Calu3 (cell line): ENCODE measurements at regions of chr6 and their contacts with region 1.

Region 1: DNA sequence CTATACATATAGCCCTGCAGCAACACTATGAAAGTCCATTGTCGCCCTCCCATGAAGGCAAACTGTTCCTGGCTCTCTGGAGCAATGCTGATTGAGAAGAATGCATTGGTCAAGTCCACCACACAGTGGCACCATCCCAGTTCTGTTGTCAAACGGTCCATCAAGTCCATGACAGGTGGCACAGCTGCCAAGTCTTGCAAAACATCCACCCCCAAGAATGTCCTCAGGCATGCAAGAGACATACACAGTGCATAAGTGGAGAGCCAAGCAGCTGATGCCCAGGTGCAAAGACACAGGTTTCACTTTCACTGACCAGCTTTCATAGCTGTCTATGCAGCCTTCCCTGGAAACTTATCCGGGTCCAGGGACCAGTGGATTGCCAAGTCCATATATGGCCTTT is 17.5 kb downstream of the ZNF391 start:
- DNase-seq: no peak
- H3K4me3 Mint-ChIP-seq: no peak overlapping the region
- H3K27ac Mint-ChIP-seq: no peak overlapping the region
- H3K4me1 Mint-ChIP-seq: no peaks in the 10 kb centered on the region
- H3K27me3 Mint-ChIP-seq: no peaks in the 10 kb centered on the region
- CTCF ChIP-seq: no peak

Region 2: DNA sequence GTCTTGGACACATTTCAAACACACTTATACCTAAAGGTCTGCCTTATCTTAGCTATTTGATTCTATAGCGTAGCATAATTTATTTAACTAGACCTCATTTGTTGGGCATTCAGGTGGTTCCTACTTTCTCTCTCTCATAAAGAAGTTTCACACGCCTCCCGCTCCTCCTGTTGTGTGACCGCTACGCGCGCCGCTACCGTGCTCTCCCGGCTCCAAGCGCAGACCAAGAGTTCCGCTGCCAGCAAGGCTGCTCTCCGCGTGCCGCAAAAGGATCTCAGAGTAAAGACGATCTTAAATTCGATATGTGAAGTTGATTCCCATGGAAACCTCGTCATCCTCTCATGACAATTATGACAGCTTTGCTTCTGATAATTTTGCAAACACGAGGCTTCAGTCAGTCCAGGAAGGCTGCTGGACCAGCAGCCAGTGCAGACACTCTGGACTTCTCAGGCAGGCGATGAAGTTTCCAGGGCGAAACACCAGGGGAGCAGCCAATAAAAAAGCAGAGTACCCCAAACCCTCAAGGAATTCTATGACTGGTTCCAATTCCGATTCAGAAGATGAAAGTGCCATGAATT is 138.1 kb before region 1 on chr6:
- CTCF ChIA-PET with region 1: no interaction called
- intact Hi-C with region 1: no loop called
- DNase-seq: no peak
- H3K4me3 Mint-ChIP-seq: no peak overlapping the region
- H3K27ac Mint-ChIP-seq: no peak overlapping the region
- H3K4me1 Mint-ChIP-seq: no peaks in the 10 kb centered on the region
- H3K27me3 Mint-ChIP-seq: no peaks in the 10 kb centered on the region
- CTCF ChIP-seq: no peak

Region 3: GRCh38 chr6:27293436-27294098 is 112.5 kb before region 1 on chr6:
- CTCF ChIA-PET with region 1: no interaction called
- intact Hi-C with region 1: no loop called
- DNase-seq: peak; percentile 40
- H3K4me3 Mint-ChIP-seq: peak overlapping the region; percentile 53
- H3K27ac Mint-ChIP-seq: peak overlapping the region; percentile 55
- H3K4me1 Mint-ChIP-seq: peaks cover 29% of the 10 kb centered on the region
- H3K27me3 Mint-ChIP-seq: no peaks in the 10 kb centered on the region
- CTCF ChIP-seq: no peak

Region 4: DNA sequence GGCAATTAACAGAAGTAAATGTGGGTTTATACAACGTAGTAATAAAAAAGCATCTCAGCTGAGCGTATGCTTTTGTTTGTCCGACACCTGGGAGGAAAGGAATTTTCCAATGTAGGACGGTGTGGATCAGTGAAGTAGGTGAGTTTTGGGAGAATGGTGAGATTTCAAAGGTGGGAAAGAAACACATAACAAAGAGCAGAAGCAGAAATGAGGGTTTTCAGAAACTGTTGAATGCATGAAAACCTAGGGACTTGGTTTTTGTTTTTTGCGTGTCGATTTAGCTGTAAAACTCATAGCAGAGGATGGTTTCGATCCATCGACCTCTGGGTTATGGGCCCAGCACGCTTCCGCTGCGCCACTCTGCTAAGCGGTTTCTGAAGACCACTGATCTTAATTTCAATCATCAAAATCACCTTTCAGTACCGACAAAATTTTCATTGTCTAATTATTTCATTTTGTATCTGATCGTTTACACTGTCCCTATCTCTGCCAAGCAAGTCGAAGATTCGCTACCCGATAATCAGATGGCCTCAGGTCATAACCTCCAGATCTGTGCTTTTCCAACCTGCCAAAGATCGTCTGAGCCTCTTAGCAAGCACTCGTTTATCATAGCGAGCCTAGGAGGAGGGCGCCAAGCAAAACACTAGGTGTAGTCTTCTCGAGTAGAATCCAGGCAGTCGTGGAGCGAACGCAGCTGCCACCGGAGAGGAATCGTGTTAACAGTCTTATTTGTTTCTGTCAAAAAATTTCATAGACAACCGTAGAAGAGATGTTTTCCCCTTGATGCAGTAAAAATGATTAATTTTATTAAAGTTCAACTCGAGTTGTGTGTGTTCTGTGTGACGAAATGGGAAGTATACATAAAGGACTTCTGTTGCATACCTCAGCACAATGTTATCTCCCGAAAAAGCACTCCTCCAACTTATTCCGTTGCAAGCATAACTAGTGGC is 73.1 kb before region 1 on chr6:
- CTCF ChIA-PET with region 1: no interaction called
- intact Hi-C with region 1: no loop called
- DNase-seq: peak; percentile 41
- H3K4me3 Mint-ChIP-seq: peak overlapping the region; percentile 80
- H3K27ac Mint-ChIP-seq: peak overlapping the region; percentile 97
- H3K4me1 Mint-ChIP-seq: peaks cover 9% of the 10 kb centered on the region
- H3K27me3 Mint-ChIP-seq: no peaks in the 10 kb centered on the region
- CTCF ChIP-seq: no peak

Region 5: GRCh38 chr6:27419363-27419762 is 13.3 kb after region 1 on chr6:
- CTCF ChIA-PET with region 1: no interaction called
- intact Hi-C with region 1: loop called (anchors 1 kb)
- DNase-seq: no peak
- H3K4me3 Mint-ChIP-seq: no peak overlapping the region
- H3K27ac Mint-ChIP-seq: no peak overlapping the region
- H3K4me1 Mint-ChIP-seq: no peaks in the 10 kb centered on the region
- H3K27me3 Mint-ChIP-seq: no peaks in the 10 kb centered on the region
- CTCF ChIP-seq: no peak